Esophagus muscularis mucosa (tissue), 4 donors: ENCODE measurements at regions of chr6 and their contacts with region 1.

Region 1: GRCh38 chr6:42043787-42044475 is 6.4 kb upstream of the TAF8 start:
- DNase-seq: peak; percentile 95
- H3K4me3 ChIP-seq: peak overlapping the region; percentile 25 to 84 (median 31)
- H3K27ac ChIP-seq: peak overlapping the region; percentile 91 to 96 (median 94)
- H3K4me1 ChIP-seq: peaks cover 59 to 95% (median 88%) of the 10 kb centered on the region in 4 donors
- H3K27me3 ChIP-seq: no peaks in the 10 kb centered on the region
- CTCF ChIP-seq: peak; percentile 97
- EP300 ChIP-seq: no peak
- POLR2A ChIP-seq: no peak

Region 2: DNA sequence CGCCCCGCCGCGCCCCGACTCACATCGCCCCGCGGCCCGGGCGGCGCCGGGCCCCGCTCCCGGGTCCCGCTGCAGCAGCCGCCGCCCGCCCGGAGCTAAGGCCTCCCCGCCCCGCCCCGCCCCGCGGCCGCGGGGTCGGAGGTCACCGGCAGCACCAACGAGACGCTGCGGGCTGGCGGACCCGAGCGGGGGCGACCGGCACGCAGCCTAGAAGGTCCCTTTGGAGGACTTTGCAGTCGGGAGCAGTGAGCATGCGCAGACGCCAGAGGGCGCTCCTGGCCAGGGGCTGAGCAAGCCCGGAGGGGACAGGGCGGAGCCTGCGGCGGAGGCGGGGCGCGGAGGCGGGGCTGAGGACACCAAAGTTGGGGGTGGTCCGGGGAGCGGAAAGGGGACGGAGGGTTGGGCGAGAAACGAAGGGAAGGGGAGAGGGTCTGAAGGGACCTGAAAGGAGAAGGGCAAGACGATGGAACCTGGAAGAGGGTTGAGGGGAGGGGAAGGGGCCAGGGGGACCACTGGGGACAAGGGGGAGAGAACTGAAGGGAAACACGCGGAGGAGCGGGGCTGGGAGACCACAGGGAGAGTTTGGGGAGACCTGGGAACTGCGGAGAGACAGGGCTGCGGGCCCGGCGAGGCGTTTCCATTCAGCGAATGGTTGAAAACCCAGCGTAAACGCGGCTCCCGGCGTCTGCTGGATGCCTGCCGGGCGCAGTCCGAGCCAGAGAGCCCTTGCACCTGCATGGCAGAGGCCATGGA is 264.0 kb before region 1 on chr6 and contains the start of gene FRS3:
- intact Hi-C with region 1: loop called (anchors 5 kb)
- DNase-seq: peak; percentile 99
- H3K4me3 ChIP-seq: peak within 1 kb of the TSS; percentile 71 to 88 (median 78)
- H3K27ac ChIP-seq: peak within 1 kb of the TSS; percentile 83 to 90 (median 88)
- H3K4me1 ChIP-seq: peaks cover 33 to 66% (median 49%) of the 10 kb centered on the region in 4 donors
- H3K27me3 ChIP-seq: no peaks in the 10 kb centered on the region
- CTCF ChIP-seq: peak; percentile 92 to 97 (median 93)
- EP300 ChIP-seq: no peak
- POLR2A ChIP-seq: no peak
- total RNA-seq, gene FRS3: 5.0 to 9.9 (median 6.7) TPM

Region 3: DNA sequence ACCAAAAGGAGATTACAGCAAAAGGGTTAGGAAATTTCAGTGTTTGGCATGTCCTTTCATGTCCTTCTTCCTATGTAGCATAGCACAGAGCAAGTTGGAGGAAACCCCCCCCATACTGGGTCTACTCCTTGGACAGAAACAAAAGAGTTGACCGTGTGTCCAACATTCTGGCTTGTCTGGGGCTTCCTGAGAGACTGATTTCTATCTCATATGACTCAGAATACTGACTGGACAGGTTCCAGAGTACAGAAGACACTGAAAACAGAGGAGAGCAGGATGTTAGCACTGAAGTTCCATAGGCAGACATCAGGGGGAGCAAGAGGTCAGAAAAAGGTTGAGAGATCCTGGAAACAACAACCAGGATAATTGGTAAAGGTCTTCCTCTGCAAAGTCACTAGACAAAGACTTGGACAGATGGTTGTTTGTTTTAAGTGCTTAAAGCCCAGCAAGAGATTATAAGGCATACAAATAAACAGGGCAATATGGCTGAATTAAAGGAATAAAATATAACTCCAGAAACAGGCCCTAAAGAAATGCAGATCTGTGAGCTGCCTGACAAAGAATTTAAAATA is 197.2 kb before region 1 on chr6:
- intact Hi-C with region 1: loop called (anchors 2 kb)
- DNase-seq: no peak
- H3K4me3 ChIP-seq: no peak overlapping the region
- H3K27ac ChIP-seq: peak overlapping the region in 3 of 4 donors; percentile 26 to 63 (median 45)
- H3K4me1 ChIP-seq: peaks cover 7 to 11% (median 11%) of the 10 kb centered on the region in 4 donors
- H3K27me3 ChIP-seq: no peaks in the 10 kb centered on the region
- CTCF ChIP-seq: peak; percentile 78 to 86 (median 84)
- EP300 ChIP-seq: no peak
- POLR2A ChIP-seq: no peak

Region 4: DNA sequence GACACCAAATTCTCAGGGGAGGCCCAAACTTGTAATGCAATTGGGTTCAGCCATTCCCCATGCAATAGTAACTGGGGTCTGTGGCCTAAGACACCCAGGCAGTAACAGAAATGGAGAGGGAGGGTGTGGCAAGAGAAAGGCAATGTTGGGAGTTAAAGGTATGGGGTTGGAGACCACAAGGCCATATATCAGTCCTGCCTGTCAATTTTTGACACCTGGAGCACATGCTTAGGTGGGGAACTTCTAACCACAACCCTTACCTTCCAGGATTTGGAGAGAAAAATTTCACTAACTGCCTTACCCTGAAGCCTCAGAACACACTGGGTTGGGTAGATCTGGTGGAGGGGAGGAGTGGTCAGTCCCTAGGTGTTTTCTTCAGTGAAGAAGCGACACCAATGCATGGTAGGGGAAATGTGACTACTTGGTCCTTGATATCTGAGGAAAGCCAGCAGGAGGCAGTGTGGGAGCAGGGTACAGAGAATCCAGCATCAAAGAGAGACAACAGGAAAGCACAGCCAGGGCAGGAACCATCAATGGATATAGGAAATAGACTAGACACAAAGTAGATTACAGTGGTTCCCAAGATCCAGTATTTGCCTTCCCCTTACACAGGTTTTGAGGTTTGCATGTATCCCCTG is 141.9 kb before region 1 on chr6:
- intact Hi-C with region 1: no loop called
- DNase-seq: no peak
- H3K4me3 ChIP-seq: no peak overlapping the region
- H3K27ac ChIP-seq: no peak overlapping the region
- H3K4me1 ChIP-seq: peaks cover 0 to 3% (median 0%) of the 10 kb centered on the region in 4 donors
- H3K27me3 ChIP-seq: no peaks in the 10 kb centered on the region
- CTCF ChIP-seq: peak in 1 of 3 experiments; percentile 10
- EP300 ChIP-seq: no peak
- POLR2A ChIP-seq: no peak

Region 5: DNA sequence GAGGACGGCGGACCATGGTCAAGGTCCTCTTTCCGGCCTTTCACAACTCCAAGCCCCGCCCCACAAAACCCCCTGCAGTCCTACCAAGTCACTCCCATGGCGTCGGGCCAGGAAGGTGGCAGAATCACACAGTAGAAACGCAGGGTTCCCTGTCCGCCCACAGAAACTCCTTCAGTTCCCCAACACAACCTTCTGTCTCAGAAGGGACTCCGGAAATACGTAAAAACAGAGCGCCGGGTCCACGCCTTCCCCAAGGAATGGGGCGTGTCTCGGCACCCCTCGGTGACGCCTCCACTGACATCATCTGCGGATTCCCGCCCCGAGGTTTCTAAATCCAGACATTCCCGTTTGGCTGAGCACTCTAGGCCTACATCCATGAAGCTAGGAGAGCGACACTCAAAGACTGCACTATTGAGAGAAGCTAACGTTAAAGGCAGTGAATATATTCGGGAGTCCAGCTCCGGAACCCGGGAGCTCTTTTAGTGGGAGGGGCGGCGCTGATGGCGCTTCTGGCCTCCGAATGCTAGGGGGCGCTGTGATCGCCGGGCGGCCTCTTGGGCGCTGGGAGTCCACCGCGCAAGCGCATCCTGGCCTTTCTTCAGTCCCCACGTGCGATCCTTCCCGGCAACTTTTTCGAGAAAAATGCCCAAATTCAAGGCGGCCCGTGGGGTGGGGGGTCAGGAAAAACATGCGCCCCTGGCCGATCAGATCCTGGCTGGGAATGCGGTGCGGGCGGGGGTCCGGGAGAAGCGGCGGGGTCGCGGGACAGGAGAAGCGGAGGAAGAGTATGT is 122.8 kb before region 1 on chr6 and contains the starts of genes BYSL and MED20:
- intact Hi-C with region 1: loop called (anchors 5 kb)
- DNase-seq: peak; percentile 98
- H3K4me3 ChIP-seq: peak within 1 kb of the TSS; percentile 71 to 92 (median 82)
- H3K27ac ChIP-seq: peak within 1 kb of the TSS; percentile 92 to 99 (median 94)
- H3K4me1 ChIP-seq: peaks cover 37 to 67% (median 55%) of the 10 kb centered on the region in 4 donors
- H3K27me3 ChIP-seq: no peaks in the 10 kb centered on the region
- CTCF ChIP-seq: peak; percentile 98 to 99 (median 99)
- EP300 ChIP-seq: no peak
- POLR2A ChIP-seq: peak; percentile 76
- total RNA-seq, gene BYSL: 5.8 to 11.6 (median 9.2) TPM
- total RNA-seq, gene MED20: 9.6 to 14.9 (median 14.2) TPM

Region 6: GRCh38 chr6:41936073-41936837 is 107.7 kb before region 1 on chr6:
- intact Hi-C with region 1: loop called (anchors 2 kb)
- DNase-seq: no peak
- H3K4me3 ChIP-seq: no peak overlapping the region
- H3K27ac ChIP-seq: peak overlapping the region in 3 of 4 donors; percentile 9 to 96 (median 21)
- H3K4me1 ChIP-seq: peaks cover 50 to 55% (median 53%) of the 10 kb centered on the region in 4 donors
- H3K27me3 ChIP-seq: no peaks in the 10 kb centered on the region
- CTCF ChIP-seq: peak; percentile 71 to 90 (median 73)
- EP300 ChIP-seq: no peak
- POLR2A ChIP-seq: no peak